Transverse colon (tissue), 4 donors: ENCODE measurements at regions of chr4 and their contacts with region 1.

Region 1: DNA sequence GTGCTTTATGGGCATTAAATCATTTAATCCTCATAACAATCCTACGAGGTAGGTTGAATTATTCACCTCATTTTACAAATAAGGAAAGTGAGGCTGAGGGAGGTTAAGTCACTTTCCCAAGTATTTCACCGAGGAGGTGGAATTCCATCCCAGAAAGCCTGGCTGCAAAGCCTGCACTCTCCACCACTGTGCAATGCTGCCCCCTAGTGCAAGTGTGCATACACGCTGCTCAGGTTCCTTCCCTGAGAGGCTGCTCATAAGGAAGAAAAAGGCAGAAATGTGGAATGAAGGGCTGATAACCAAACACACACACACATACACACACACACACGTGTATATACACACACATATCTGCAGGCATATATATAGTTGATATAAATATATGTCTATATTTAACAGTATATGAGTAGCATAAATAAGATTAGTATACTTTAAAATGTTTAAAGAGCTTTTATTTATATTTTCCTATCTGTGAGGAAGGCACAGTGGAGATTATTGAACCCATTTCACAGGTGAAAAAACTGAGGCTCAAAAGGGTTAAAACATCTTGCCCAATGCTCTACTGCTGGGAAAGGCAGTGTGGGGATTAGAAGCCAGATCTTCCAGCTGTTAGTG is 714.5 kb upstream of the TENM3 start:
- DNase-seq: peak; percentile 80
- H3K4me3 ChIP-seq: no peak overlapping the region
- H3K27ac ChIP-seq: no peak overlapping the region
- H3K4me1 ChIP-seq: no peaks in the 10 kb centered on the region
- H3K27me3 ChIP-seq: no peaks in the 10 kb centered on the region
- CTCF ChIP-seq: peak; percentile 68 to 81 (median 76)
- EP300 ChIP-seq: no peak
- POLR2A ChIP-seq: no peak

Region 2: GRCh38 chr4:181143250-181143854 is 385.3 kb before region 1 on chr4:
- in situ Hi-C with region 1: loop called in 2 of 4 experiments (anchors 10 to 25 kb)
- intact Hi-C with region 1: loop called (anchors 10 kb)
- DNase-seq: peak; percentile 77
- H3K4me3 ChIP-seq: no peak overlapping the region
- H3K27ac ChIP-seq: no peak overlapping the region
- H3K4me1 ChIP-seq: no peaks in the 10 kb centered on the region
- H3K27me3 ChIP-seq: peaks cover 4% of the 10 kb centered on the region
- CTCF ChIP-seq: peak; percentile 69 to 91 (median 88)
- EP300 ChIP-seq: no peak
- POLR2A ChIP-seq: no peak

Region 3: GRCh38 chr4:181294421-181294820 is 234.3 kb before region 1 on chr4:
- in situ Hi-C with region 1: loop called in 1 of 4 experiments (anchors 10 kb)
- intact Hi-C with region 1: no loop called
- DNase-seq: no peak
- H3K4me3 ChIP-seq: no peak overlapping the region
- H3K27ac ChIP-seq: no peak overlapping the region
- H3K4me1 ChIP-seq: no peaks in the 10 kb centered on the region
- H3K27me3 ChIP-seq: no peaks in the 10 kb centered on the region
- CTCF ChIP-seq: no peak
- EP300 ChIP-seq: no peak
- POLR2A ChIP-seq: no peak

Region 4: DNA sequence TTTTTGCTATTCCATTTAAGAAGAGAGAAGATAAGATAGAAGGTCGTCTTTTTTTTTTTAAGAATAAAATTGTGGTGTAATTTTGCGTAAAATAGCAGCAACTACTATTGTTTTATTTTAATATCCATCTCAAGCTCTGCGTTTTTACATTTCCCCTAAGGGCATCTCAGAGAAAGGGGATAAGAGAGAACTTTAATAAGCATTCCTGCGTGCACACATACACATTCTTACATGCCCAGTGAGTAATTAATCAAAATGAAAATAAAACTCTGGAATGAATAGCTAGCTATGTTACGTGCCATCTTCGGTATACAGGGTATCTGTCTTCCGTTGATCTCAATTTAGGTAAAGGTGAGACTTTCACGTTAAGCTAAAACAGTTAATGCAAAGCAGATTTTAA is 514.3 kb after region 1 on chr4:
- in situ Hi-C with region 1: no loop called
- intact Hi-C with region 1: no loop called
- DNase-seq: no peak
- H3K4me3 ChIP-seq: no peak overlapping the region
- H3K27ac ChIP-seq: no peak overlapping the region
- H3K4me1 ChIP-seq: no peaks in the 10 kb centered on the region
- H3K27me3 ChIP-seq: no peaks in the 10 kb centered on the region
- CTCF ChIP-seq: no peak
- EP300 ChIP-seq: no peak
- POLR2A ChIP-seq: no peak